Posterior vena cava (tissue), 2 donors: ENCODE measurements at regions of chr17 and their contacts with region 1.

Region 1: GRCh38 chr17:43755389-43755875 is 3.2 kb downstream of the SOST start:
- DNase-seq: peak; percentile 81

Region 2: GRCh38 chr17:43576563-43577229 is 178.7 kb before region 1 on chr17:
- intact Hi-C with region 1: loop called in 1 of 2 experiments (anchors 10 kb)
- DNase-seq: peak; percentile 89

Region 3: DNA sequence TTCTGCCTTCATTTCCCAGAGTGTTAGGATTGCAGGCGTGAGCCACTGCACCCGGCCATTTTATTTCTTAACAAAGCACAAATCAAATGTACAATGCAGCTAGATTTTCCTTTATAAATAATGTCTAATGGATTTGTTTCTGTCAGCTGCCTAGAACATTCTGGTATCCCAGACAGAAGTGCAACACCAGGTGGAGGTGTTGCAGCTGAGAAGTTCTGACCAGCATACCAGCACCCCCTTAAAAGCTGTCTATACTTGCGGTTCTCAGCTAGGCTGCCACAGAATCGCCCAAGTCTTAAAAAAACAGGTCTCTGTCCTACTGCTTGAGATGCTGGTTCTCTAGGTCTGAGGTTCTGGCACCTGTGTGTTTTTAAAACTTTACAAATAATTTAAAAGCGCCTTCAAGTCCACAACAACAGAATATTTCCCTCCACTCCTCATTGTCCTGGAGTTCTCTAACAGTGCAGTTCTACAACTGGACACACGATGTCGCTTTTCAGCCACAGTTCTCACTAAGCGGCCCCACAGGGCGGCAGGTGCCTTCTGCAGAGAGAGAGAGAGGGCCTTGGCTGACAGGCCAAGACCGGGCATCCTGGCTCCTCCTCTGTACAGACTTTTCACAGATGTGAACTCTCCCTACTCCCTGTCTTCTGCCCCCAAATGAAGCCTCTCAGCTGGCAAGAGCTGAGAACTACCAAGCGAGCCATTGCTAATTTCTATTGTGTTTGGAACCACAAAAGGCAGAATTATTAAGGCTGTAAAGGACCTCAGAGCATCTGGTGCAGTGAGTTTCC is 61.2 kb before region 1 on chr17:
- intact Hi-C with region 1: loop called (anchors 2 to 5 kb)
- DNase-seq: no peak

Region 4: DNA sequence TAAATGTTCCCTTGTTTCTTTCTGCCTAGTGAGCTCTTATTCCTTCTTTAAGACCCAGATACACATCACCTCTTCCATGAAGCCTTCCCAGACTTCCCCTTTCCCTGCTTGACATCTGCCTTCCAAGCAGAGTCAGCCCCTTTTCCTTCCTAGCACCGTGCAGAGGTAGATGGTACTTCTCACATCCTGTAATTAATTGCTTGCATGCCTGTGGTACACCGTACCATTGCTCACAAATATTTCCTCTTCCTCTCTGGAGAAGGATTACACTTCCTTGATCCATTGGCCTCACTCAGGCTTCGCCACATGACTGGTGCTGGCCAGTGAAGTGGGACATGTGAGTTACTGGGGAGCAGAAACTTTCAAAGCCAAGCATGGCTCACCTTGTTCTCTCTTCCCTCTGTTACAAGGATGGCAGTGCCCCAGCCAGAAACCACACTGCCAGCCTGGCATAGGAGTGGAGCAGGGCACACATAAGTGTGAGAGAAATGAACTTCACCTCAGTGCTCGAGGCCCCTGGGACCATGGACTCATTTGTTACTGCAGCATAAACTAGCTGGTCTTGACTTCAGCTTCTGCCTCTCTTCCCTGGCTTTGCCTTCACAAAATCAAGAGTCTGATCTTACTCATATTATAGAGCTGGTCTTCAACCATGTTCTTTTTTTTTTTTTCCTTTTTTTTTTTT is 40.8 kb before region 1 on chr17:
- intact Hi-C with region 1: loop called in 1 of 2 experiments (anchors 5 kb)
- DNase-seq: no peak